Caco-2 (cell line): ENCODE measurements at regions of chr18 and their contacts with region 1.

Region 1: DNA sequence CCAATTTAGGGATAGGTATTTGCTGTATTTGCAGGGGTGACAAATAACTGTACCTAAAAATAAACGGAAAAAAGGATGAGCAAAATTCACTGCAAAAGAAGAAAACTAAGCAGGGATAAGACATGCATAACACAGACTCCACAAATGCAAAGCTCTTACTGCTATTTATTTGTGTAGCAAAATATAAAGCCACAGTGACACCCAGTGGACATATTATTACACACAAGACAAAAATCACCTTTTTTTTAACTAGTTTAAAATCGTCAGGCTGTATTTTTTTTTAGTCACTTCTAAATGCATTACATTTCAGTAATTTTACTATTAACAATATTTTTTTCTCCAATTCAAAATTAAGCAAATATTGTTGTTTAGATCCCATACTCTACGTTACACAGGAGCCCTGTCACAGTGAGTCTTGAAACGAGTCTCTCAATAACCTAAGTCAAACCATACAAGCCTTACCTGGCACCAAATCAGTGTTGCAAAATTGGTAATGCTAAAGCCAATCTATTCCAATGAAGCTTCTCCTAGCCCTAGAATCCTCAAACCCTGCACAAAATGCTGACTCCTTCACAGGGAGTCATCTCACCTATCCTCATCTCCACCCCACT is 23.7 kb downstream of the METTL4 start:
- DNase-seq: peak in 1 of 2 experiments; percentile 23
- H3K4me3 ChIP-seq: no peak overlapping the region
- H3K4me3 Mint-ChIP-seq: no peak overlapping the region
- H3K27ac Mint-ChIP-seq: no peak overlapping the region
- H3K4me1 ChIP-seq: no peaks in the 10 kb centered on the region
- H3K4me1 Mint-ChIP-seq: no peaks in the 10 kb centered on the region
- H3K27me3 ChIP-seq: no peaks in the 10 kb centered on the region
- H3K27me3 Mint-ChIP-seq: no peaks in the 10 kb centered on the region
- CTCF ChIP-seq: peak; percentile 33 to 39

Region 2: DNA sequence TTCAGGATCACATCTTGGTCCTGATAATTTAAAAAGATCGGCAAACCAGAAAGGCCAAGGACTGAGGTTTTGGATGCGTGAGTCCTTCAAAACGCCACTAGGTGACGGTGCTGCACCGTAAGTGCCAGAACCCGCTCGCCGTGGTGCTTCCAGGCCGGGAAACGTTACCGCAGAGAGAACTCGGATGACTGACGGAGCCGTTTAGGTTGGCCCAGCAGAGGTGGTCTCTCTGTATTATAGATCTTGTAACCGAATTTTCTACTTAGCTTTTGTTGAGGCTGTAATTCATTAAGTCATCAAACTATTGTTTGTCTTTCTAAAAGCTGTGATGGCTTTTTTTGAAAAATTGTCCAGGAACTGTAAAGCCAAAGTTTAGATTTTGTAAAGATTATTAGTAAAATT is 1682.7 kb before region 1 on chr18:
- CTCF ChIA-PET with region 1: no interaction called
- POLR2A ChIA-PET with region 1: no interaction called
- intact Hi-C with region 1: loop called (anchors 10 kb)
- DNase-seq: peak; percentile 73 to 74
- H3K4me3 ChIP-seq: no peak overlapping the region
- H3K4me3 Mint-ChIP-seq: no peak overlapping the region
- H3K27ac Mint-ChIP-seq: no peak overlapping the region
- H3K4me1 ChIP-seq: no peaks in the 10 kb centered on the region
- H3K4me1 Mint-ChIP-seq: no peaks in the 10 kb centered on the region
- H3K27me3 ChIP-seq: no peaks in the 10 kb centered on the region
- H3K27me3 Mint-ChIP-seq: peaks cover 12% of the 10 kb centered on the region
- CTCF ChIP-seq: peak; percentile 93 to 99

Region 3: GRCh38 chr18:1585879-1586488 is 961.6 kb before region 1 on chr18:
- CTCF ChIA-PET with region 1: interaction called, 3 read pairs
- POLR2A ChIA-PET with region 1: no interaction called
- intact Hi-C with region 1: loop called (anchors 5 kb)
- DNase-seq: peak in 1 of 2 experiments; percentile 9
- H3K4me3 ChIP-seq: no peak overlapping the region
- H3K4me3 Mint-ChIP-seq: no peak overlapping the region
- H3K27ac Mint-ChIP-seq: no peak overlapping the region
- H3K4me1 ChIP-seq: no peaks in the 10 kb centered on the region
- H3K4me1 Mint-ChIP-seq: no peaks in the 10 kb centered on the region
- H3K27me3 ChIP-seq: no peaks in the 10 kb centered on the region; the same call in none of the 2 replicates
- H3K27me3 Mint-ChIP-seq: peaks cover 11% of the 10 kb centered on the region
- CTCF ChIP-seq: peak in 1 of 2 experiments; percentile 48

Region 4: GRCh38 chr18:1663879-1664705 is 883.5 kb before region 1 on chr18:
- CTCF ChIA-PET with region 1: interaction called, 3 read pairs
- POLR2A ChIA-PET with region 1: no interaction called
- intact Hi-C with region 1: loop called (anchors 10 kb)
- DNase-seq: peak; percentile 58 to 78
- H3K4me3 ChIP-seq: no peak overlapping the region
- H3K4me3 Mint-ChIP-seq: no peak overlapping the region
- H3K27ac Mint-ChIP-seq: no peak overlapping the region
- H3K4me1 ChIP-seq: no peaks in the 10 kb centered on the region
- H3K4me1 Mint-ChIP-seq: no peaks in the 10 kb centered on the region
- H3K27me3 ChIP-seq: no peaks in the 10 kb centered on the region
- H3K27me3 Mint-ChIP-seq: no peaks in the 10 kb centered on the region
- CTCF ChIP-seq: peak; percentile 90 to 94

Region 5: GRCh38 chr18:1914490-1914889 is 633.1 kb before region 1 on chr18:
- CTCF ChIA-PET with region 1: no interaction called
- POLR2A ChIA-PET with region 1: no interaction called
- intact Hi-C with region 1: loop called (anchors 10 kb)
- DNase-seq: peak; percentile 32 to 41
- H3K4me3 ChIP-seq: no peak overlapping the region
- H3K4me3 Mint-ChIP-seq: no peak overlapping the region
- H3K27ac Mint-ChIP-seq: no peak overlapping the region
- H3K4me1 ChIP-seq: no peaks in the 10 kb centered on the region
- H3K4me1 Mint-ChIP-seq: no peaks in the 10 kb centered on the region
- H3K27me3 ChIP-seq: no peaks in the 10 kb centered on the region
- H3K27me3 Mint-ChIP-seq: no peaks in the 10 kb centered on the region
- CTCF ChIP-seq: peak; percentile 41 to 63

Region 6: GRCh38 chr18:2104620-2105462 is 442.7 kb before region 1 on chr18:
- CTCF ChIA-PET with region 1: interaction called, 6 read pairs
- POLR2A ChIA-PET with region 1: no interaction called
- intact Hi-C with region 1: loop called (anchors 1 kb)
- DNase-seq: peak; percentile 48 to 61
- H3K4me3 ChIP-seq: no peak overlapping the region
- H3K4me3 Mint-ChIP-seq: no peak overlapping the region
- H3K27ac Mint-ChIP-seq: no peak overlapping the region
- H3K4me1 ChIP-seq: peaks cover 4% of the 10 kb centered on the region; the same call in 1 of the 2 replicates
- H3K4me1 Mint-ChIP-seq: no peaks in the 10 kb centered on the region
- H3K27me3 ChIP-seq: no peaks in the 10 kb centered on the region
- H3K27me3 Mint-ChIP-seq: no peaks in the 10 kb centered on the region
- CTCF ChIP-seq: peak; percentile 73 to 85

Region 7: GRCh38 chr18:2805970-2806943 is 258.7 kb after region 1 on chr18:
- CTCF ChIA-PET with region 1: no interaction called
- POLR2A ChIA-PET with region 1: no interaction called
- intact Hi-C with region 1: no loop called
- DNase-seq: no peak
- H3K4me3 ChIP-seq: no peak overlapping the region
- H3K4me3 Mint-ChIP-seq: no peak overlapping the region
- H3K27ac Mint-ChIP-seq: no peak overlapping the region
- H3K4me1 ChIP-seq: no peaks in the 10 kb centered on the region
- H3K4me1 Mint-ChIP-seq: peaks cover 9% of the 10 kb centered on the region
- H3K27me3 ChIP-seq: no peaks in the 10 kb centered on the region
- H3K27me3 Mint-ChIP-seq: no peaks in the 10 kb centered on the region
- CTCF ChIP-seq: no peak

Region 8: GRCh38 chr18:2857491-2858131 is 310.0 kb after region 1 on chr18:
- CTCF ChIA-PET with region 1: no interaction called
- POLR2A ChIA-PET with region 1: no interaction called
- intact Hi-C with region 1: no loop called
- DNase-seq: peak in 1 of 2 experiments; percentile 57
- H3K4me3 ChIP-seq: no peak overlapping the region
- H3K4me3 Mint-ChIP-seq: no peak overlapping the region
- H3K27ac Mint-ChIP-seq: peak overlapping the region; percentile 65
- H3K4me1 ChIP-seq: peaks cover 54% of the 10 kb centered on the region
- H3K4me1 Mint-ChIP-seq: peaks cover 41% of the 10 kb centered on the region
- H3K27me3 ChIP-seq: no peaks in the 10 kb centered on the region
- H3K27me3 Mint-ChIP-seq: no peaks in the 10 kb centered on the region
- CTCF ChIP-seq: no peak